Activated B cell treated with CpG ODN at 0.5 μM for 24 hours (primary cell): ENCODE measurements at regions of chr1 and their contacts with region 1.

Region 1: DNA sequence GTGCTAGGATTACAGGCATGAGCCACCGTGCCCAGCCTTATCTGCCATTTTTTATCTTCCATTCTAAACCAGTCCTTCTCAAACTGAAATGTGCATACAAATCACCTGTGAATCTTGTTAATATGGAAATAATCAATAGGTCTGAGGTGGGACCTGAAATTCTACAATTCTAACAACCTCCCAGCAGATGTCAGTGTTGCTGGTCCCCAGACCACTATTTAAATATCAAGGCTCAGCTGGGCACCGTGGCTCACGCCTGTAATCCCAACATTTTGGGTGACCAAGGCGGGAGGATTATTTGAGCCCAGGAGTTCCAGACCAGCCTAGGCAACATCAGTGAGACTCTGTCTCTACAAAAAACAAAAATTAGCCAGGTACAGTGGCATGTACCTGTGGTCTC is 4.1 kb downstream of the UQCRHL start:
- DNase-seq: peak; percentile 17
- ATAC-seq: peak; percentile 55
- H3K4me3 Mint-ChIP-seq: no peak overlapping the region
- H3K27ac Mint-ChIP-seq: no peak overlapping the region
- H3K4me1 Mint-ChIP-seq: peaks cover 7% of the 10 kb centered on the region
- H3K27me3 Mint-ChIP-seq: peaks cover 5% of the 10 kb centered on the region
- CTCF ChIP-seq: no peak

Region 2: GRCh38 chr1:15885701-15886610 is 82.6 kb after region 1 on chr1:
- CTCF ChIA-PET with region 1: no interaction called
- POLR2A ChIA-PET with region 1: no interaction called
- intact Hi-C with region 1: no loop called
- DNase-seq: peak; percentile 49
- ATAC-seq: peak; percentile 23
- H3K4me3 Mint-ChIP-seq: peak overlapping the region; percentile 75
- H3K27ac Mint-ChIP-seq: peak overlapping the region; percentile 87
- H3K4me1 Mint-ChIP-seq: peaks cover 78% of the 10 kb centered on the region
- H3K27me3 Mint-ChIP-seq: no peaks in the 10 kb centered on the region
- CTCF ChIP-seq: no peak

Region 3: GRCh38 chr1:15994590-15995351 is 191.4 kb after region 1 on chr1:
- CTCF ChIA-PET with region 1: interaction called, 7 read pairs
- POLR2A ChIA-PET with region 1: no interaction called
- intact Hi-C with region 1: loop called (anchors 1 kb)
- DNase-seq: no peak
- ATAC-seq: peak; percentile 94
- H3K4me3 Mint-ChIP-seq: no peak overlapping the region
- H3K27ac Mint-ChIP-seq: no peak overlapping the region
- H3K4me1 Mint-ChIP-seq: no peaks in the 10 kb centered on the region
- H3K27me3 Mint-ChIP-seq: no peaks in the 10 kb centered on the region
- CTCF ChIP-seq: no peak

Region 4: DNA sequence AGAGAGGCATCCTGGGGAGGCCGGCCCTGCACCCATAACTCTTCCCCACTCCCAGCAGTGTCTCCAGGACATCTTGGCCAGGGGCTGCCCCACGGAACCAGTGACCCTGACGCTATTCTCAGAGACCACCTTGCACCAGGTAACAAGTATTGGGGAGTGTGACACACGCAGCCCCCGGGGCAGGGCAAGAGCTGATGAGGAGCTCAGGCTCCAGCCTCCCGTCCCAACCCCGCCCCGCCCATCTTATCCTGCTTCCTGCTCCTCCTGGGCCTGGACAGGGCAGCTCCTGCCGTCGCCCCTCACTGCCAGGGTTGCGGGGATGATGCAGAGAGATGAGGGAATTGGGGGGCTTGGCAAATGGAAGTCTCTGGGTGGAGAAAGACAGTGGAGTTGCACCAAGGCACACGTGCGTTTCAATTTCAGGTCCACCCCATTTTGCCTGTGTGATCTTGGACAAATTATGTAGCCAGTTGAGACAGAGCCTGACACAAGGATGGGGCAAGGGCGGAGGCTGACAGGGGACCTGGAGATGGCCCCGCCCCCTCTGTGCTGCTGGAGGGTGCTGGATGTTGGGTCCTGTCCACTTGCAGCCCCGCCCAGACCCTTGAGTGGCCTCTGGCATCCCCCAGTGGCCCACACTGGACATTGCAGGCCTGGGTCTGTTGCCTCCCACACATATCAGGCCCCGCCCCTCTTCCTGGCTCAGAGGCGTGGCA is 229.2 kb after region 1 on chr1:
- CTCF ChIA-PET with region 1: no interaction called
- POLR2A ChIA-PET with region 1: no interaction called
- intact Hi-C with region 1: loop called (anchors 1 kb)
- DNase-seq: peak; percentile 50
- ATAC-seq: peak; percentile 100
- H3K4me3 Mint-ChIP-seq: no peak overlapping the region
- H3K27ac Mint-ChIP-seq: no peak overlapping the region
- H3K4me1 Mint-ChIP-seq: peaks cover 2% of the 10 kb centered on the region
- H3K27me3 Mint-ChIP-seq: peaks cover 28% of the 10 kb centered on the region
- CTCF ChIP-seq: no peak

Region 5: GRCh38 chr1:16055613-16056520 is 252.5 kb after region 1 on chr1:
- CTCF ChIA-PET with region 1: interaction called, 7 read pairs
- POLR2A ChIA-PET with region 1: no interaction called
- intact Hi-C with region 1: loop called (anchors 1 kb)
- DNase-seq: peak; percentile 77
- ATAC-seq: peak; percentile 100
- H3K4me3 Mint-ChIP-seq: no peak overlapping the region
- H3K27ac Mint-ChIP-seq: no peak overlapping the region
- H3K4me1 Mint-ChIP-seq: peaks cover 6% of the 10 kb centered on the region
- H3K27me3 Mint-ChIP-seq: peaks cover 6% of the 10 kb centered on the region
- CTCF ChIP-seq: no peak